WTC11 (cell line): ENCODE measurements at regions of chr12 and their contacts with region 1.

Region 1: DNA sequence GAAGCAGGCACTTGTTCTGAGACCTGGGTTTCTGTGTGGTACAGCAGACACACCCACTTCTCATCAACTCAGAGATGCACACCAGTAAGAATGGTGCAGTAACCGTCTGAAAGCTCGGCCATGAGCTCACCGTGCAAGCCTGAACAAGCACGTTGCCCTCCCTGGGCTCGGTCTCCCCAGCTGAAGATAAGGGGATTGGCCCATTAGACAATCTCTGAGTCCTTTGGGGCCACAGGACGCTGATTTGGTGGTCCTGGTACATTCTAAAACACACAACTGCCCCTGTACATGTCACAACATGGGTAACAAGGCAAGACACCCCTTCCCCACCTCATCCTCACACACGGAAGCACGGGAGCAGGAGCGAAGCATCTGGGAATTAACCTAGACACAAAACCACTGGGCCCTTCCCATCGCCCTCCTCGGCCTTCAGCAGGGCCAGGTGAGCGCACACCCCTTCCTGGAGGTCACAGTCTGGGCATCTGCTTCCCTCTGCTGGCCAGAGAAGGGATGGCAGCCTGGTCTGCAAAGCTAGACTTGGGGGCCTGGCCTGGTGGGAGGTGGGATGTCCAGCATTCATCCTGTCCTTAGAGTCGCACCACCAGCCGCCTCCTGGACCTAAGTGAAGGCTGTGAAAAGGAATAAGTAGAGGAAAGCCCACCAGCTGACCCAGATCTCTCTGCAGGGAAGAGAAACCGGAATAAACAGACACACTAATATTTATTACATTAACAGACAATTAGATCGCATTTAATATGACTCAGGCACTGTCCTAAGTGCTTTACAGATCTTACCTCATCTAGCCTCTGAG is 18.9 kb upstream of the SMUG1 start:
- DNase-seq: peak; percentile 98
- ATAC-seq: peak; percentile 97
- H3K4me3 Mint-ChIP-seq: no peak overlapping the region
- H3K27ac Mint-ChIP-seq: no peak overlapping the region
- H3K4me1 Mint-ChIP-seq: peaks cover 9% of the 10 kb centered on the region; the same call in 1 of the 2 replicates
- H3K27me3 Mint-ChIP-seq: peaks cover 85% of the 10 kb centered on the region
- CTCF ChIP-seq: peak; percentile 88

Region 2: GRCh38 chr12:53984901-53985709 is 222.6 kb before region 1 on chr12 and contains the start of gene HOXC10:
- CTCF ChIA-PET with region 1: interaction called, 40 read pairs
- POLR2A ChIA-PET with region 1: no interaction called
- DNase-seq: peak; percentile 95
- ATAC-seq: peak; percentile 56
- H3K4me3 Mint-ChIP-seq: peak within 1 kb of the TSS; percentile 52
- H3K27ac Mint-ChIP-seq: no peak within 1 kb of the TSS
- H3K4me1 Mint-ChIP-seq: peaks cover 34% of the 10 kb centered on the region
- H3K27me3 Mint-ChIP-seq: peaks cover 100% of the 10 kb centered on the region
- CTCF ChIP-seq: peak; percentile 76
- total RNA-seq, gene HOXC10: 0.09 TPM in 1 of 3 replicates, not detected in the others

Region 3: DNA sequence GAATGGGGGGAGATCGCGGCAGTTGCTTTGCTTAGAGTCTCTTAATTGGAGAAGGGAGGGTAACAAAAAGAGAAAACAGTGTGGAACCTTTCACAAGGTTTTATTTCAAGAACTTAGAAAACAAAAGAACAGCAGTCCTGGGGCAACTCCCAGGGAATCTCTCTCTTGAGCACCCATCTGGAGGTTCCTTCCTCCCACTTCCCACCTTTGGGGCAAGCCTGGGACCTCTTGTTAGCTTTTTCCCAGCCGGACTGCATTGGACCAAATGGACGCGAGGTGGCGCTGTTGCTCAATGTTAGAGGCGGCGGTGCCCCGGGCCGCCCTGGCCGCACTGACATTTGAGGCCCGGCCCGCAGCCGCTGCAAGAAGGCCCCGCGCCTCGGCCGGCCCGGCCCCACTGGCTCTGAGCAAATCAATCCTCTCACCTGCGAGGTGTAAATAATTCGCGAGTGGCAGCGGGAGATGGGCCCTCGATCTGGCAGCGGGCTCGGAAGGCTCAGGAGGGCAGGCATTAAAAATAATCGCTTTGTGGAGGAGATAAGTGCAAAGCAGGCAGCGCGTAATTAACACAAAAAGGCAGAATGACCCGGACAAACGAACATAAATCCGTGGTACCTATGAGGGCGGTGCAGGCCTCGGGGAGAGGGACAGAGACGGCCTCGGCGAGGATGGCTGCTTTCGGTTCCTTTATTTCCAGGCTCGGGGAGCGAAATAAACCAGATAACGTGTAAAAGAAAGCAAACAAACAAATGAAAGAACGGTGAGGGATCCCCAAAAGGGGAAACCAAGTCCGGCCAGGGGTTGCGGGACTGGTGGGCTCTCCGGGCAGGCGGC is 201.6 kb before region 1 on chr12:
- CTCF ChIA-PET with region 1: interaction called, 107 read pairs
- POLR2A ChIA-PET with region 1: no interaction called
- DNase-seq: peak; percentile 96
- ATAC-seq: peak; percentile 69
- H3K4me3 Mint-ChIP-seq: peak overlapping the region; percentile 34
- H3K27ac Mint-ChIP-seq: no peak overlapping the region
- H3K4me1 Mint-ChIP-seq: peaks cover 20% of the 10 kb centered on the region
- H3K27me3 Mint-ChIP-seq: peaks cover 100% of the 10 kb centered on the region
- CTCF ChIP-seq: peak; percentile 96

Region 4: GRCh38 chr12:54053751-54054741 is 153.6 kb before region 1 on chr12 and contains the start of gene HOXC4:
- CTCF ChIA-PET with region 1: interaction called, 24 read pairs
- POLR2A ChIA-PET with region 1: no interaction called
- DNase-seq: peak; percentile 38
- ATAC-seq: peak; percentile 29
- H3K4me3 Mint-ChIP-seq: peak within 1 kb of the TSS; percentile 64
- H3K27ac Mint-ChIP-seq: no peak within 1 kb of the TSS
- H3K4me1 Mint-ChIP-seq: peaks cover 63% of the 10 kb centered on the region
- H3K27me3 Mint-ChIP-seq: peaks cover 100% of the 10 kb centered on the region
- CTCF ChIP-seq: no peak
- total RNA-seq, gene HOXC4: 0.14 to 0.46 TPM (median 0.30 TPM) in 3 replicates

Region 5: DNA sequence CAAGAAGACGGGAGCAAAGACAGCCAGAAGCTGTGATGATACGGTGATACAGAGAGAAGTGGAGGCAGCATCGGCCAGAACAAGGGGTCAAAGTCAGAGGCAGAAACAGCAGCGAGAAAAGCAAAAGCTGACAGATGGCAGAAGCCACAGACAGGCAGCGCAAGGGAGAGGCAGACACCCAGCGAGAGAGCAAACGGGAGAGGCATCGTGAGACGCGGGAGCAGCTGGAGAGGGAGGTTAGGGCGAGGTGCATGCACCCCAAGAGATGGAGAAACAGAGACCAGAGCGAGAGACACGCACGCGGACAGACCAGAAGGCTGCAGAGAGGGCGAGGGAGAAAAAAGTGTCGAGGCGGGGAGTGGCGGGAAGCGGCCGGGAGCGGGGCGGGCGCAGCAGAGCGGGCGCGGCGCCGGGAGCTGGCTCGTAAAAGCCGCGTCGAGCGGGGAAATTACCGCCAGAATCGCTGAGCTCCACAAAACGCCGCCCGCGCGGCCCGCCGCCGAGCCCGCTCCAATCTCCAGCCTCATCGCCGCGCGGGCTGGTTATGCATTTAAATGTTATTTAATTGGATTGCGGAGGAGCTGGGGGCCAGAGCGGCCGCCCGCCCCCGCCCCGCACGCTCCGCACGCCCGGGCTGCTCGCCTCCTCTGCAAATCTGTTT is 34.5 kb before region 1 on chr12:
- CTCF ChIA-PET with region 1: interaction called, 12 read pairs
- POLR2A ChIA-PET with region 1: no interaction called
- DNase-seq: peak; percentile 48
- ATAC-seq: peak; percentile 62
- H3K4me3 Mint-ChIP-seq: no peak overlapping the region
- H3K27ac Mint-ChIP-seq: no peak overlapping the region
- H3K4me1 Mint-ChIP-seq: peaks cover 3% of the 10 kb centered on the region; the same call in 1 of the 2 replicates
- H3K27me3 Mint-ChIP-seq: peaks cover 13% of the 10 kb centered on the region
- CTCF ChIP-seq: no peak